GM10248 (cell line): ENCODE measurements at regions of chr22 and their contacts with region 1.

Region 1: GRCh38 chr22:30289134-30289979 is at the start of gene CASTOR1:
- DNase-seq: peak; percentile 98
- CTCF ChIP-seq: no peak

Region 2: DNA sequence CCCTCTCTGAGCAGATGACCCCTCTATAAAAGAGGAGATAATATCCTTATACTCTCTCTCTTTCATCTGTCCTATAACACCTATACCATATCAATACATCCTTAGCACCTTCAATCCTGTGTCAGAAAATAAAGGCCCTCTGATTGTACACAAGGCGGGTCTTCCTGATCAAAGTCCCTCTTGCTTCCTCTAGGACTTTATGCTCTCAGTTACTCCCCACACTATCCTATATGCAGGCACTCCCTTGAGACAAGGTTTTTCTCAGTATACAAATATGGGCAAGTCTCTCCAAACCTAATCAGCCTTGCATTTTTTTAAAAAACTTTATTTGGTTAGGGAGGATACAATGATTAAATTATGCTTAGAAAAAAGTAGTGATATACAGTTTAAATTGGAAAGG is 226.4 kb before region 1 on chr22:
- CTCF ChIA-PET with region 1: no interaction called
- POLR2A ChIA-PET with region 1: no interaction called
- DNase-seq: no peak
- CTCF ChIP-seq: no peak

Region 3: GRCh38 chr22:30104501-30105156 is 184.7 kb before region 1 on chr22:
- CTCF ChIA-PET with region 1: interaction called, 79 read pairs
- POLR2A ChIA-PET with region 1: interaction called, 4 read pairs
- DNase-seq: no peak
- CTCF ChIP-seq: no peak

Region 4: DNA sequence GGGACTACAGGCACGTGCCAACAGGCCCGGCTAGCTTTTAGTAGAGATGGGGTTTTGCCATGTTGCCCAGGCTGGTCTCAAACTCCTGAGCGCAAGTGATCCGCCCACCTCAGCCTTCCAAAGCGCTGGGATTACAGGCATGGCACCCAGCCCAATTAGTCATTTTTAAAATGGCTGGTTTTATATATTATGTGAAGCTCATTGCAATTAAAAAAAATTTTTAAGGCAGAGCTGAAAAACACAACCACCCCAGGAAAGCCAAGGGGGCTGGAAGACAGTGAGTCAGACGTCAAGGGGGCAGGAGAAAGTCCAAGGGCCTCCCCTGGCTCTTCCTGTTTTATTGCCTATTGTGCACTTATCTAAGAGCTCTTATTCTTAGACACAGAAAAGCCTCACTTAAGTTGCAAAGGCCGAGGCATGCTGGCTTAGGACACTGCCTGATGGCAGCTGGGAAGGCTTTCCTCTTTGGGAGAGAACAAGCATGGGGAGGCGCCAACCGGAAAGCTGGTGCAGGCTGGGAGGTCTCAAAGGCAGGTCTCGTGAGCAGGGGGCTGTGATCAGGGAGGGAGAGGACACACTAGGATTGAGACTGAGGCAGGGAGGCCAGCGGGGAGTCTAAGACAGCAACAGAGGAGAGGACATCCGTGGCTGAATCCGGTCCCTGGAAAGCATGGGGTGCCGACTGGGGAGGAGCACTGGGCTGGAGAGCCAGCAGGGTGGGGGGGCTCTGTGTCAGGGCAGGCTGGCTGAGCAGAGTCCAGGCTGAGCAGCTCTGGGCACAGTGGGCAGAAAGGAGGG is 11.6 kb before region 1 on chr22:
- CTCF ChIA-PET with region 1: interaction called, 33 read pairs
- POLR2A ChIA-PET with region 1: no interaction called
- DNase-seq: no peak
- CTCF ChIP-seq: no peak

Region 5: DNA sequence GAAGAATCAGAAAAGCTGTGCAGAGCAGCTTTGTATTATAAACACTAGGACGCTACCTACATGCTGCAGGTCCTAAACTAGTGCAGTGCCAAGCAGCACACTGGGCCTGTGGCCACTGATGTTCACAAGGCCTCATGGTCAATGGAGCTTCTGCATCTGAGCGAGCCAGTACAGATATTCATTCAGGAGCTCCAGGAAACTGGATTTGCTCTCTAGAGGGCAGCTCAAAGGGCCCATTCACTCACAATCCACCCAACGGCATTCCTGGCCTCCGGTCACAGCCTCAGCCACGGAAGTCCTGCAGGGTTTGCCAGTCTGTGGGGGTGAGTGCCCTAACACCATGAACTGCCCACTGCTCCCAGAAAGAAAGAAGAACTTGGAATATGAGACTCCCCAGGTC is 43.2 kb after region 1 on chr22:
- CTCF ChIA-PET with region 1: interaction called, 55 read pairs
- POLR2A ChIA-PET with region 1: no interaction called
- DNase-seq: no peak
- CTCF ChIP-seq: no peak

Region 6: DNA sequence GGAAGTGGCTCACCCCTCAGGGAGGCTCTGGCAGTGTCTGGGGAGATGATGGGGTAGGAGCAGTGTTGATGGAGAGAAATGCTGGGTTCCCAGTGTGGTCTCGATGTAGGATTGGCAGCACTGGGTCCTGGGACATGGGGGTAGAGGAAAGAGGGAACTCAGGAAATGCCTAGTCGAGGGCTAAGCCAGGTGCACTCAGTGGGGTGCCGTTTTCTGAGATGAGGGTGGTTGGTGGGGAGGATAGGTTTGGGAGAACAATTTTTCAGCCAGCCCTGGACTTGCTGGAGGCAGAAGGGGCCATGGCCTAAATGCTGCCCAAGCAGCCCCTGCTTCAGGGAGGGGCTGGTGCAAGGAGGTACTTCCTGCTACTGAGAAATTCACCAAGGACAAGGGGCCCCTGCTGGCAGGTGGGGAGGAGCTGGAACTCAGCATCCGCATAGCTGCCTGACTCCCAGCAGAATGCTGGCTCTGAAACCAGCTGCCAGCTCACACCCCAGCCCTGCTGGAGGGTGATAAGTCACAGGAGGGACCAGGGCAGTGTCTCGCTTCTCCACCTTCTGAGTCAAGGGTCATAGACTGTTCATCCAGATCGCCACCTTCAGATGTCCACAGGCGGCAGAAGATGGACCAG is 73.4 kb after region 1 on chr22:
- CTCF ChIA-PET with region 1: interaction called, 20 read pairs
- POLR2A ChIA-PET with region 1: no interaction called
- DNase-seq: no peak
- CTCF ChIP-seq: no peak

Region 7: GRCh38 chr22:30386960-30387827 is 97.8 kb after region 1 on chr22 and contains the start of gene RNF215:
- CTCF ChIA-PET with region 1: interaction called, 307 read pairs
- POLR2A ChIA-PET with region 1: interaction called, 6 read pairs
- DNase-seq: peak; percentile 96
- CTCF ChIP-seq: peak; percentile 93

Region 8: GRCh38 chr22:30413745-30414524 is 124.6 kb after region 1 on chr22:
- CTCF ChIA-PET with region 1: interaction called, 13 read pairs
- POLR2A ChIA-PET with region 1: no interaction called
- DNase-seq: no peak
- CTCF ChIP-seq: no peak

Region 9: DNA sequence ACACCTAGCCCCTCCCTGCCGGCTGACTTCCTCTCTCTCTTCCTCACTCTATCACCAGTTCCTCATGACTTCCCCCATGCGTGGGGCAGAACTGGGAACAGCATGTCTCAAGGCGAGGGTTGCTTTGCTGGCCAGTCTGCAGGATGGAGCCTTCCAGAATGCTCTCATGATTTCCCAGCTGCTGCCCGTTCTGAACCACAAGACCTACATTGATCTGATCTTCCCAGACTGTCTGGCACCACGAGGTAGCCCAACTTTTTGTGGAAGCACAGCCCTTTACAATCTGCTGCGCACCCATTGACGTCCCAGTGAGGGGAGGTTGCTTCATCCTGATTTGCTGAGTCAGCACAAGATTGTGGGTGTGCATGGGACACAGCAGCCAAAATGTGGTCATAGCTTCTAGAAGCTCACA is 326.2 kb after region 1 on chr22:
- CTCF ChIA-PET with region 1: no interaction called
- POLR2A ChIA-PET with region 1: no interaction called
- DNase-seq: no peak
- CTCF ChIP-seq: no peak